AG04450 (cell line): ENCODE measurements at regions of chr15 and their contacts with region 1.

Region 1: GRCh38 chr15:49082960-49083359 is 36.7 kb upstream of the SECISBP2L start:
- DNase-seq: peak; percentile 84
- H3K4me3 ChIP-seq: no peak overlapping the region
- H3K27ac ChIP-seq: peak overlapping the region; percentile 43
- H3K27me3 ChIP-seq: no peaks in the 10 kb centered on the region
- CTCF ChIP-seq: no peak

Region 2: GRCh38 chr15:49046220-49047102 is 36.5 kb before region 1 on chr15 and contains the start of gene SECISBP2L:
- CTCF ChIA-PET with region 1: interaction called, 4 read pairs
- POLR2A ChIA-PET with region 1: interaction called, 16 read pairs
- DNase-seq: peak; percentile 77
- H3K4me3 ChIP-seq: peak within 1 kb of the TSS; percentile 89
- H3K27ac ChIP-seq: peak within 1 kb of the TSS; percentile 42
- H3K27me3 ChIP-seq: no peaks in the 10 kb centered on the region
- CTCF ChIP-seq: no peak
- polyA plus RNA-seq, gene SECISBP2L: 41.3 and 42.7 TPM in 2 replicates